ENCODE measurements at regions of chr9 and their contacts with region 1.

Region 1: GRCh38 chr9:38068866-38069629 is at the start of gene SHB:
- DNase-seq: peak; percentile 81
- H3K4me3 ChIP-seq: peak within 1 kb of the TSS; percentile 93 to 96
- H3K27ac ChIP-seq: peak within 1 kb of the TSS; percentile 88 to 90
- H3K4me1 ChIP-seq: peaks cover 9% of the 10 kb centered on the region
- H3K27me3 ChIP-seq: no peaks in the 10 kb centered on the region
- CTCF ChIP-seq: peak in 1 of 4 experiments; percentile 65
- POLR2A ChIP-seq: peak; percentile 69
- total RNA-seq, gene SHB: 53.2 to 54.8 TPM

Region 2: GRCh38 chr9:38017149-38017884 is 51.7 kb before region 1 on chr9:
- intact Hi-C with region 1: loop called (anchors 5 kb)
- DNase-seq: peak; percentile 85
- H3K4me3 ChIP-seq: no peak overlapping the region
- H3K27ac ChIP-seq: peak overlapping the region; percentile 53 to 63
- H3K4me1 ChIP-seq: peaks cover 40% of the 10 kb centered on the region
- H3K27me3 ChIP-seq: no peaks in the 10 kb centered on the region
- CTCF ChIP-seq: peak in 3 of 4 experiments; percentile 48 to 82 (median 72)
- POLR2A ChIP-seq: no peak

Region 3: GRCh38 chr9:38032266-38033110 is 36.6 kb before region 1 on chr9:
- intact Hi-C with region 1: loop called (anchors 5 kb)
- DNase-seq: peak; percentile 78
- H3K4me3 ChIP-seq: no peak overlapping the region
- H3K27ac ChIP-seq: peak overlapping the region; percentile 67 to 72
- H3K4me1 ChIP-seq: peaks cover 18% of the 10 kb centered on the region
- H3K27me3 ChIP-seq: no peaks in the 10 kb centered on the region
- CTCF ChIP-seq: no peak
- POLR2A ChIP-seq: no peak

Region 4: DNA sequence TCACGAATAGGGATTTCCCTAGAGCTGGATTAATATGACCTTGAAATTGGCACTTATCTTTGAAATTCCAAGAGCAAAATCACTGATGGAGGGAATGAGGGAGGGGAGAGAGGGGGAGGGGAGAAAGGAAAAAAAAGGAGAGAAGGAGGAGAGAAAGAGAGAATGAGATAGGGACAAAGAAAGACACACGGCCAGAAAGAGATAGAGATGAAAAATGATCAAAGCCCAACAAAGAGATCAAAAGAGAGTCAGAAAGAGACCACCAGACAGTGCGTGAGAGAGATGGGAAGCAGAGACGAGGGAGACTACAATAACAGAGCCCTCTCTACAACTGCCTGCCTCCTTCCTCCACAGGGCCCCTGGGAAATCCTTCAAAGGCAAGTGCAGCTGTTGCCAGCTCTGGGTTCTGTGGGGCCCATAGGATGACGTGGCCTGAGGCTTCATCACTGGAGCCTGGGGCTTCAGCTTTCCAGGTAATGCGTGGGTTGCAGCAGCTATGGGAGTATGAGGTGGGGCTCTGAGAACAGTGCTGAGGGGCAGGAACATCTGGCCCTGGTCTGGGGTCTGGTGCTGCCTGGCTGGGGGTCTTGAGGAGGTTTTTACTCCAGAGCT is 58.3 kb after region 1 on chr9:
- intact Hi-C with region 1: no loop called
- DNase-seq: no peak
- H3K4me3 ChIP-seq: no peak overlapping the region
- H3K27ac ChIP-seq: no peak overlapping the region
- H3K4me1 ChIP-seq: no peaks in the 10 kb centered on the region
- H3K27me3 ChIP-seq: no peaks in the 10 kb centered on the region
- CTCF ChIP-seq: no peak
- POLR2A ChIP-seq: no peak

Region 5: DNA sequence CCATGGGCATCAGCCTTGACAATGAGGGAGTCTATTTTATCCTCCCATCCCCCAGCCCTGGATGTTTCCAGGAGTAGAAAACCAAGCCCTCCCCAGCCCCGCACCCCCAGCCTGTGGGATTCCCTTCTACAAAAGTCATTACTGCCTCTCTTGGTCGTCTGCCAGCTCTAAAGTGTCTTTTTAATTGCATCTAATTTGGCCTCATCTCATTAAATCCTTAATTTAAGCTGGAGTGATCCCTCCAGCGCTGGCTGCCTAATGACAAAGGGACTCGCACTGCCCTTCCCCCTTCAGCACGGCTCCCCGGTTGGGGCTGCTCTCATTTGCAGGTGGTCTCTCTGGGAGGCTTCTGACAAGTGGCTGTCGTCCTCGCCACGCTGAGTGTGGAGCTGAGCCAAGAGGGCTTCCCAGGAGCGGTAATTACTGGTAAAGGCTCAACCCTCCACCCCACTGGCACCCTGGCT is 215.6 kb after region 1 on chr9:
- intact Hi-C with region 1: no loop called
- DNase-seq: no peak
- H3K4me3 ChIP-seq: no peak overlapping the region
- H3K27ac ChIP-seq: no peak overlapping the region
- H3K4me1 ChIP-seq: no peaks in the 10 kb centered on the region
- H3K27me3 ChIP-seq: no peaks in the 10 kb centered on the region
- CTCF ChIP-seq: no peak
- POLR2A ChIP-seq: no peak

Measured in prostate gland (tissue), 2 donors.